ENCODE measurements at regions of chr4 and their contacts with region 1.

Region 1: GRCh38 chr4:66688674-66689073 is 856.6 kb downstream of the CENPC start:
- DNase-seq: no peak
- ATAC-seq: peak; percentile 61
- H3K4me3 ChIP-seq: no peak overlapping the region
- H3K27ac ChIP-seq: no peak overlapping the region
- H3K4me1 ChIP-seq: no peaks in the 10 kb centered on the region
- H3K27me3 ChIP-seq: no peaks in the 10 kb centered on the region
- CTCF ChIP-seq: no peak
- EP300 ChIP-seq: no peak
- POLR2A ChIP-seq: no peak
- RAD21 ChIP-seq: no peak

Region 2: DNA sequence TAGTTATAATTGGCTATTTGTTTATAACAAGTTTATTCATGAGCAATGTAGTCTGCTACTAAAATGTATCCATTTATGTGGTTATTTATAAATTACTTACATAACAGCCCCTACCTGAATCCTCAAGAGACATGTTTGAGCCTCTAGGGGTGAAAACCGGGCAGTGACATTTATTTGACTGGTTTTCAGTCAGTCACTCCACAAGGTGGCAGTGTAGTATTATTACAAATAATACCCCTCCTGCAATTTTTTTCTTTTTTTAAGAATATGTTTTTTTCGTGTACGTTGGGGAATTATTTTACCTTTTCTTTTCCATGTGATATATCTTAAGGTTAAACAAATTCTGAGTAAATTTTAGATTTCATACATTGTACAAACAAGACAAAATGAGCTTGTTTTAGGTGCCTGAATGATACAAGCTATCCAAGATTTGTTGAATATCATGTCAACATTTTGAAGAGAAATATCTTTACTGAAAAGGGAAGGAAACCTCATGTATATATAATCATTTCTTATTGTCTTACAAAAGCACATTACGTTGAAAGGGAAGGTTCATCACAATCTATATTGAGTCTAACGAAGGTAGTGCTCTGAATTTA is 1680.7 kb before region 1 on chr4:
- CTCF ChIA-PET with region 1: no interaction called
- POLR2A ChIA-PET with region 1: no interaction called
- in situ Hi-C with region 1: loop called (anchors 25 kb)
- intact Hi-C with region 1: loop called (anchors 5 kb)
- DNase-seq: peak; percentile 47
- ATAC-seq: peak; percentile 66
- H3K4me3 ChIP-seq: no peak overlapping the region
- H3K27ac ChIP-seq: no peak overlapping the region
- H3K4me1 ChIP-seq: no peaks in the 10 kb centered on the region
- H3K27me3 ChIP-seq: no peaks in the 10 kb centered on the region
- CTCF ChIP-seq: peak; percentile 38
- EP300 ChIP-seq: no peak
- POLR2A ChIP-seq: no peak
- RAD21 ChIP-seq: no peak

Measured in HepG2 (cell line).